SK-N-SH (cell line): ENCODE measurements at regions of chr1 and their contacts with region 1.

Region 1: GRCh38 chr1:19374083-19374801 is 62.1 kb downstream of the SLC66A1 start:
- DNase-seq: no peak
- H3K4me3 ChIP-seq: no peak overlapping the region
- H3K27ac ChIP-seq: peak overlapping the region in 1 of 2 experiments; percentile 98; a peak in 2 of 4 replicates
- H3K4me1 ChIP-seq: peaks cover 0 to 62% of the 10 kb centered on the region in 2 experiments; a peak in 2 of 4 replicates
- H3K27me3 ChIP-seq: no peaks in the 10 kb centered on the region
- CTCF ChIP-seq: peak; percentile 28; the same call in 1 of the 2 replicates
- EP300 ChIP-seq: no peak
- RAD21 ChIP-seq: no peak

Region 2: DNA sequence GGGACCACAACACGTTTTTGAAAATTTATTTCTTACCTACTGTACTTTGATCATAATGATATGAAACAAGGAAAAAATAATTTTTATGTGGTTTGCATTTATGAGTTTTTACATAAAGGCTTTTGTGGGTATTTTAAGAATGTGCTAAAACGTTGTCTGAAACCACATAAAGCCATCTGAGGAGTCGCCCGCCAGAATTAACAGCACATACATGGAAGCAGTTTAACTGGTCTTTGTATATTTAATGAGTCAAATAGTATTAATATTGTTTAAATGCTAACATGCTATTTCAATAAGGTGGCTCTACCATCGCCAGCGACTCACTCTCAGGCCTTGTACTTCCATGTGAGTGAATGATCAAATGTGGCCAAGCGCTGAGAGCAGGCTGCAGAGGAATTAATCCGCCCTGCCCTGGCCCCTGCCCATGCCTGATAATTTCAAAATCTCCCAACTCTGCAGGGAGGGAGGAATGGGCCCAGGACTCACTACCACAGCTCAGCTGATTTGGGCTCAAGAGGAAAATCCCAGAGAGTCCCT is 12.6 kb before region 1 on chr1:
- CTCF ChIA-PET with region 1: interaction called, 16 read pairs
- POLR2A ChIA-PET with region 1: no interaction called
- DNase-seq: no peak
- H3K4me3 ChIP-seq: no peak overlapping the region
- H3K27ac ChIP-seq: peak overlapping the region in 1 of 2 experiments; percentile 11; a peak in 1 of 4 replicates
- H3K4me1 ChIP-seq: peaks cover 0 to 23% of the 10 kb centered on the region in 2 experiments; a peak in 1 of 4 replicates
- H3K27me3 ChIP-seq: no peaks in the 10 kb centered on the region
- CTCF ChIP-seq: no peak
- EP300 ChIP-seq: no peak
- RAD21 ChIP-seq: no peak

Region 3: DNA sequence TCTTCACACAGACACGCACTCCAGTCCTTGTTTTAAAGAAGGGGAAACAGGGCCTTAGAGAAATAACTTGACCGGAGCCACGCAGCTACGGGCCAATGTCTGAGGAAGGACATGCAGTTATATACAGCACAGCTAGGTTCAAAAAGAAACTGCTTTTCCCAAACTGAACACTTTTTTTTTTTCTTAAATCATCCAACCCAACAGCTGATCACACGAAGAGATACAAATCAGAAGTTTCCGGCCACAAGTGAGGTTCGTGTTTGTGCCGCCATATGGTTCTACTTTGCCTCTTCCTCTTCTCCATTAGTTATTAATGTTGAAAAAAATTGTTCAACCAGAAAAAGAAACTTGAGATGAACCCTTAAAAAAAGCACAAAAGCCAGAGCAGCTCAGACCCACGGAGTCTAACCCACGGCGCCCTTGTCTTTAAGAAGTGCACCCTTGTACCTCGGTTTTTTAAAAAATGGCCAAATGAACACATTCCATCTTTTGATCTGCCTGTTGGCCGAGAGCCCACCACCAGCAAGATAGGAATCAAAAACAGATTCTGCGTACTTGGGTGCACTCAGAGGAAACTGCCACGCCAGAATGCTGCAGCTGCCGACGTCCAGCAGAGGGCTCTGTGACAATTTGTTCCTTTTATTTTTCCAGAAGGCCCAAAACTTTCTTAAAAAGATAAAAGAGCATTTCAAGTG is 16.8 kb after region 1 on chr1:
- CTCF ChIA-PET with region 1: interaction called, 40 read pairs
- POLR2A ChIA-PET with region 1: no interaction called
- DNase-seq: peak; percentile 85
- H3K4me3 ChIP-seq: peak overlapping the region; percentile 33 to 56
- H3K27ac ChIP-seq: peak overlapping the region; percentile 80 to 97
- H3K4me1 ChIP-seq: peaks cover 37 to 70% of the 10 kb centered on the region in 2 experiments
- H3K27me3 ChIP-seq: no peaks in the 10 kb centered on the region
- CTCF ChIP-seq: peak; percentile 98
- EP300 ChIP-seq: peak; percentile 76 to 84
- RAD21 ChIP-seq: peak; percentile 77